Aorta (tissue), 5 donors: ENCODE measurements at regions of chr3 and their contacts with region 1.

Region 1: DNA sequence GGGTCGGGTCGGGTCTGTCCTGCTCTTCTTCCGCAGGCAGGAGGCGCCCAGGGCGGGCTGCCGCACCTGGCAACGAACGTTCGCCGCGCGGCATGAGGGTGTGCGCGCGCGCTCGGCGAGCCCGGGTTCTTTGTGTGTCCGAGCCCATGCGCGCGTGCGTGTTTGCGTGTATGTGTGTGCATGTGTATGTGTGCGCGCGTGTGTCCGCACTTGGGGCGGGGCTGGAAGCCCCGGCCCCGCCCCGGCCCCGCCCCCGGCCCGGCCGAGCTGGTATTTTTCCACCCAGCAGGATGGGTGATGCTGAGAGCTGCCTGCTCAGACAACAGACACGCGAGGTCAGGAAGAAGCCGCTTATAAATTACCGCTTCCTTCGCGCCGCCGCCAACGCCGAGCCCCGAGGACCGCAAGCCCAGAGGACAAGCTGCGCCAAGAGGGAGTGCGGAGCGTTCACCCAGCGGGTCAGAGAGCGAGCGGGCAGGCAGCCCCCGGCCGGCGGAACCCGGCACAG is at the start of gene SLC6A6:
- DNase-seq: peak; percentile 96 to 97
- ATAC-seq: peak; percentile 89
- H3K4me3 ChIP-seq: peak within 1 kb of the TSS; percentile 49 to 85
- H3K27ac ChIP-seq: peak within 1 kb of the TSS in 1 of 2 donors; percentile 76
- H3K4me1 ChIP-seq: peaks cover 0 to 3% of the 10 kb centered on the region in 2 donors
- H3K27me3 ChIP-seq: no peaks in the 10 kb centered on the region
- total RNA-seq, gene SLC6A6: 36.5 to 62.2 TPM

Region 2: DNA sequence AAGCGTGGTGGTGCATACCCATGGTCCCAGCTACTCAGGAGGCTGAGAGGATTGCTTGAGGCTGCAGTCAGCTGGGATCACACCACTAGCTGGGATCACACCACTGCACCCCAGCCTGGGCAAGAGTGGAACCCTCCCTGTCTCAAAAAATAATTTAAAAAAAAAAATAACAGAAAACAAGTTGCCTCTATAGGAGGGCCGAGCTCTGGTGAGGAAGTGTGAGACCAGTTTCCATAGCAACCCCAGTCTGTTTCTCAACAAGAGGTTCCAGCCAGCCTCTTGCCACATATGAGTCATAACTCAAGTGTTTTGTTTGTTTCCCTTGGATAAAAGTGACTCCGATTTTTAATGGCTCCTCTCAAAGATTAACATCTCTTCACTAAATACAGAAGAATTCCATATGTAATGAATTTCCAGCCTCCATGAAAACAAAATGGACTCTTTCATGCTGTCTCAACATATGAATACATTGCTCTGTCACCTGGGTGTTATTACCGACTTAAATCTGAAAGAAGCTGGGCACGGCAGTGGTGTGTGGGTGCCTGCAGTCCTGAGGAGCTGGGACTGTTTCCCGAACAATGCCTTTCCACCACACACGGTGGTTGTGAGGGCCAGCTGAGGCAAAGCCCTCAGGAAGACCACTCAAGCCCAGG is 257.8 kb before region 1 on chr3:
- intact Hi-C with region 1: loop called in 1 of 2 experiments (anchors 10 kb)
- DNase-seq: peak; percentile 79 to 81
- ATAC-seq: peak; percentile 91
- H3K4me3 ChIP-seq: no peak overlapping the region
- H3K27ac ChIP-seq: peak overlapping the region; percentile 89 to 99
- H3K4me1 ChIP-seq: peaks cover 3 to 4% of the 10 kb centered on the region in 2 donors
- H3K27me3 ChIP-seq: no peaks in the 10 kb centered on the region

Region 3: DNA sequence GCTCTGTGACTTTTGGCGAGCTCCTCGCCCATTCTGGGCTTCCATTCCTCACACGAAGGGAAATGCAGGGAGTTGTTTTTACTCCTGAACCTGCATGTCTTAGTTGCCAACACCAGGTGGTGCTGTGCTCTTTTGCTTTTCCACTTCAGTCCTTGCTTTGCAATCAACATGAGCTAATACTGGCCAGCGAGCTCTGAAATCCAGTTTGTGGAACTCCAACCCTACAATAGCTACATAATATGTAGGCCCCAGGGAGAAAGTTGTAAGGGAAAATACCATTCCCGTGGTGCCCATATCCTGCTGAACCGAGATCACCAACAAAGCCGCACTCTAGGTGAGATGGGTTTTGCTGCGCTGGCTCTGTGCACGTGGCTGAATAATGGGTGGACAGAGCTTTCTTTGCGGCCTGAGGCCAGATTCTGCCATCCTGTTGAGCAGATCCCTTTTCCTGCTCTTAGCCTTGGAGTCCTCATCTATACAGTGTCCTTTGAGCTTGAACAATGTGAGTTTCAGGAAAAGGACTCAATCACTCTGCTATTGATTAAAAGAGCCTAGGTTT is 198.8 kb before region 1 on chr3:
- intact Hi-C with region 1: loop called in 1 of 2 experiments (anchors 10 kb)
- DNase-seq: peak in 1 of 2 donors; percentile 64
- ATAC-seq: peak; percentile 91
- H3K4me3 ChIP-seq: no peak overlapping the region
- H3K27ac ChIP-seq: no peak overlapping the region
- H3K4me1 ChIP-seq: peaks cover 2% of the 10 kb centered on the region in 2 donors
- H3K27me3 ChIP-seq: no peaks in the 10 kb centered on the region

Region 4: GRCh38 chr3:14261229-14261628 is 141.1 kb before region 1 on chr3:
- intact Hi-C with region 1: no loop called
- DNase-seq: peak; percentile 83 to 94
- ATAC-seq: peak; percentile 86
- H3K4me3 ChIP-seq: no peak overlapping the region
- H3K27ac ChIP-seq: no peak overlapping the region
- H3K4me1 ChIP-seq: no peaks in the 10 kb centered on the region
- H3K27me3 ChIP-seq: no peaks in the 10 kb centered on the region

Region 5: DNA sequence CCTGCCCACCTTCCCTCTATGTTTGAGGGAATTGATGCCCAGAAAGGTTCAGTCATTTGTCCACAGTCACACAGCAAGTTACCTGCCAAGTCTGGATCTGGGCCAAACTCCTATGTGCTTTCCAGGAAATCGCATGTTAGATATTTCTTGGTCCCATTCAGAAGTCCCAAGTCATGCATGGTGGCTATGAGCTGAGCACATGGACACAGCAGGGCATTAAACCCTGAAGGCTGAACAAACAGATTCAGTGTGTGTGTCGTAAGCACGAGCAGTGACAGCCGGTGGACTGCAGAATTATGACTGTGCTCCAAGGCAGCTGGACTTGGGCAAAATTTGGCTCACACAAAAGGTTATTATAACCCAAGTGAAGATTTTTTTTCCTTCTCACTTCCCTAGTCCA is 11.3 kb before region 1 on chr3:
- intact Hi-C with region 1: no loop called
- DNase-seq: peak in 1 of 2 donors; percentile 74
- ATAC-seq: peak; percentile 63
- H3K4me3 ChIP-seq: no peak overlapping the region
- H3K27ac ChIP-seq: no peak overlapping the region
- H3K4me1 ChIP-seq: no peaks in the 10 kb centered on the region
- H3K27me3 ChIP-seq: no peaks in the 10 kb centered on the region

Region 6: GRCh38 chr3:14431892-14432834 is 29.8 kb after region 1 on chr3:
- intact Hi-C with region 1: loop called in 1 of 2 experiments (anchors 2 kb)
- DNase-seq: peak; percentile 95 to 97
- ATAC-seq: peak; percentile 91
- H3K4me3 ChIP-seq: no peak overlapping the region
- H3K27ac ChIP-seq: peak overlapping the region in 1 of 2 donors; percentile 35
- H3K4me1 ChIP-seq: no peaks in the 10 kb centered on the region
- H3K27me3 ChIP-seq: no peaks in the 10 kb centered on the region

Region 7: GRCh38 chr3:14452679-14453367 is 50.5 kb after region 1 on chr3:
- intact Hi-C with region 1: loop called (anchors 5 kb)
- DNase-seq: peak; percentile 95 to 96
- ATAC-seq: peak; percentile 95
- H3K4me3 ChIP-seq: no peak overlapping the region
- H3K27ac ChIP-seq: peak overlapping the region in 1 of 2 donors; percentile 77
- H3K4me1 ChIP-seq: no peaks in the 10 kb centered on the region
- H3K27me3 ChIP-seq: no peaks in the 10 kb centered on the region

Region 8: DNA sequence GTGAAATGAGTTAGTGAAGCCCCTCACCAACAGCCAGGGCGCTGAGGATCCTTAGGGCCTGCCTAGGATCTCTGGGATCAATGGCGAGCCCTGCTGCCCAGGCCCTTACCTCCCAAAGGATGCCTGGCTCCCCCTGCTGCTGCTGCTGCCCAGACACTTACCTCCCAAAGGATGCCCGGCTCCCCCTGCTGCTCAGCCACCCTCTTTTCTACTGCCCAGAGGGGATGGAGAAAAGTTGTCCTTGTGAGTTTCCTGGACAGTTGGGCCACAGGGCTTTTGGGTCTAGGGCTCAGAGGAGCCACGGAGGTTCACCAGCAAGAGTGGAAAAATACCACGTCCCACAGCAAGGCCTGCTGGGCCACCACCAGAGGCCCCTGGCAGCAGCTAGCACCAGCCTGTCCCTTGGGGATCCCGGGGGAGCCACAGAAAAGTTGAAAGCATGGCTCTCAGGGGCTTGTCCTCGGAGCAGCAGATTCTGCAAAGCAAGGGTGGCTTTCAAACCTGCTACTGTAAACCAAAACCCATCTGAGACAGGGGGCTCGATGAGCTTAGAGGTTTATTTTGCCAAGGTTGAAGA is 59.5 kb after region 1 on chr3:
- intact Hi-C with region 1: loop called in 1 of 2 experiments (anchors 2 kb)
- DNase-seq: peak in 1 of 2 donors; percentile 83
- ATAC-seq: peak; percentile 23
- H3K4me3 ChIP-seq: no peak overlapping the region
- H3K27ac ChIP-seq: no peak overlapping the region
- H3K4me1 ChIP-seq: no peaks in the 10 kb centered on the region
- H3K27me3 ChIP-seq: no peaks in the 10 kb centered on the region